ENCODE measurements at regions of chr12 and their contacts with region 1.

Region 1: DNA sequence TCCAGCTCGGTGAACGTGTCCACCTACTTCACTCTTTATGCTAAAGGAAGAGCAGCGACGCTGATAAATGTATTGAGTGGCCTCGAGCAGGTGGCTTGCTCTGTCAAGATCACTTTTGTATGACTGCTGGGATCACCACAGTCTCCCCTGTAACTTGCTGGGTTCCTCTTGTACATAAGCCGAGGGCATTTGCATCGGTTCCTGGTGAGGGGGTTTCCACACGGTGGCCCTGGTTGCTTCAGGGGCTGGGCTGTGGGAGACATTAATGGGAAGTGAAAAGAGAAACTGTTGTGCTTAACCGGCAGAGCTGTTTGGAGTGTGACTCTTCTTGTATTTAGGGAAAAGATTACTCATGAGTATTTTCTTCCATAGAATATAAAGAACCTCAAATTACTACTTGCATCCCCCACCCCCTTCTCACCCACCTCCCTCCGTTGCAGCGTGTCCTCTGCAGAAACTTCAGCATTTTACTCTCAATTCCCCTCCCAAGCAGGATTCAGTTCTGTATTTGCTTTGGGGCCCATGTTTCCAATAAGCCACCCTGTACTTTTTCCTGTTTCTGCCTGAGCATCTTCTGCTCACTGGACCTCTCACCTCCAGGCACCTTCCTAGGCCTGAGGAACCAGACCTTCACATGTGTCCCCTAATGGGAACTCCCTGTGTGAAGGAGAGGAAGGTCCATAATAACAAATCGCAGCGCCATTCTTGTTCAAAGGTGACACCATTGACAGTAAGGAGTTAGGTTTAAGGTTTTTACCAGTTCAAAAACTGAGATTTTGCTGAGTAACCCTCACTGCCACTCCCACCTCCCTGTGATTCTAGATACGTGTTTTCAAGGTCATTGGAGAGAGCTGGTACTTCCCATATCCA is 187.0 kb downstream of the ETV6 start:
- DNase-seq: peak; percentile 53
- H3K4me3 Mint-ChIP-seq: peak overlapping the region; percentile 67
- H3K27ac Mint-ChIP-seq: peak overlapping the region; percentile 94
- H3K4me1 Mint-ChIP-seq: peaks cover 91% of the 10 kb centered on the region
- H3K27me3 Mint-ChIP-seq: no peaks in the 10 kb centered on the region

Region 2: GRCh38 chr12:11771356-11771755 is 65.2 kb before region 1 on chr12:
- intact Hi-C with region 1: loop called (anchors 1 kb)
- DNase-seq: no peak
- H3K4me3 Mint-ChIP-seq: no peak overlapping the region
- H3K27ac Mint-ChIP-seq: peak overlapping the region; percentile 98
- H3K4me1 Mint-ChIP-seq: peaks cover 96% of the 10 kb centered on the region
- H3K27me3 Mint-ChIP-seq: no peaks in the 10 kb centered on the region

Region 3: DNA sequence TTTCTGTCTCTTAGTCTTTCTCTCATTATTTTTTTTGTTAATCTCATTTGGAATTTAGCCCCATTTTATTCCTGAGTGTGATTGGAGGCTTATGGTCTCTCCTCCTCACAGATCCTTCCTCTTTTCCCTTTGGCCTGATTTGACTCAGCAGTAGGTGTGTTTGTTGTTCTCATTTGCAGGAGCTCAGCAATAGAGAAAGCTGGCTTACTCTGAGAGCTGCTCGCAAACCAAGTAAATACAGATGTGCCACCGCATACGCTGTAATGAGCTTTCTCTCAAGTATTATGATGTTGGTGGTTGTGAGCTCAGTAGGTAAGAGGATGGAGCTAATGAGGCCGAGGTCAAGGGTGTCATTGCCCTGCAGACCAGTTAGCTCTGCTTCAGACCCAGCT is 19.5 kb after region 1 on chr12:
- intact Hi-C with region 1: loop called (anchors 1 kb)
- DNase-seq: no peak
- H3K4me3 Mint-ChIP-seq: peak overlapping the region; percentile 62
- H3K27ac Mint-ChIP-seq: peak overlapping the region; percentile 88
- H3K4me1 Mint-ChIP-seq: peaks cover 74% of the 10 kb centered on the region
- H3K27me3 Mint-ChIP-seq: no peaks in the 10 kb centered on the region

Region 4: GRCh38 chr12:11958221-11959091 is 121.9 kb after region 1 on chr12:
- intact Hi-C with region 1: loop called (anchors 1 kb)
- DNase-seq: peak; percentile 55
- H3K4me3 Mint-ChIP-seq: peak overlapping the region; percentile 29
- H3K27ac Mint-ChIP-seq: peak overlapping the region; percentile 89
- H3K4me1 Mint-ChIP-seq: peaks cover 76% of the 10 kb centered on the region
- H3K27me3 Mint-ChIP-seq: no peaks in the 10 kb centered on the region